Activated CD4-positive, alpha-beta T cell treated with anti-CD3 and anti-CD28 coated beads, Interleukin-2, amount 10 ng/mL, durations not matched to agents 7 days and 5 days (primary cell): ENCODE measurements at regions of chr11 and their contacts with region 1.

Region 1: DNA sequence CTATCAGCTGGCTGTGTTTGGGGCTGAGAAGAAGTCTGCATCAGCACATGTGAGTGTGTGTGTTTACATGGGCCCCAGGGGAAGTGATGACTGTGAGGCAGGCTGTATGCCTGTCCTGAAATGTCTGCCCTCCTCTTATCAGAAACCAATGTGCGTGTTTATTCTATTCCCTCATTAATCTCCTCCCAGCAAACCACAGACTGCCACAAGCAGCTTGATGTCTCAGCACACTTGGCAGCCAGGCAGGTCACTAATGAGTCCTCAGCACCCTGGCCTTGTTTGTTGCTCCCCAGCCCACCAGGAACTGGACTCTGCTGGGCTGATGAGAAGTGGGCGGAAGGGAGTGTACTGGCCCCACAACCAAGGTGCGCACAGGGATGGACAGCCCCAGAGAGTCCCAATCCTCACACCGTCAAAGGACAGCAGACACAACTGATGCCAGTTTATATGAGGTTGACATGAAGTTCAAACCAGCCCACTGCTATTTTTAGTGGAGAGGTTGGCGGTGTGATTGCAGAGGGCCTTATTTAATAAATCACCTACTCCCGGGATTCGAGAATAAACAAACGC is 225.8 kb downstream of the ETS1 start:
- DNase-seq: no peak
- H3K4me3 Mint-ChIP-seq: no peak overlapping the region
- H3K27ac Mint-ChIP-seq: no peak overlapping the region
- H3K4me1 Mint-ChIP-seq: peaks cover 9% of the 10 kb centered on the region
- H3K27me3 Mint-ChIP-seq: no peaks in the 10 kb centered on the region

Region 2: GRCh38 chr11:128342511-128343134 is 18.9 kb before region 1 on chr11:
- CTCF ChIA-PET with region 1: interaction called, 18 read pairs
- POLR2A ChIA-PET with region 1: no interaction called
- DNase-seq: peak; percentile 62
- H3K4me3 Mint-ChIP-seq: peak overlapping the region; percentile 66
- H3K27ac Mint-ChIP-seq: peak overlapping the region; percentile 98
- H3K4me1 Mint-ChIP-seq: peaks cover 78% of the 10 kb centered on the region
- H3K27me3 Mint-ChIP-seq: no peaks in the 10 kb centered on the region

Region 3: DNA sequence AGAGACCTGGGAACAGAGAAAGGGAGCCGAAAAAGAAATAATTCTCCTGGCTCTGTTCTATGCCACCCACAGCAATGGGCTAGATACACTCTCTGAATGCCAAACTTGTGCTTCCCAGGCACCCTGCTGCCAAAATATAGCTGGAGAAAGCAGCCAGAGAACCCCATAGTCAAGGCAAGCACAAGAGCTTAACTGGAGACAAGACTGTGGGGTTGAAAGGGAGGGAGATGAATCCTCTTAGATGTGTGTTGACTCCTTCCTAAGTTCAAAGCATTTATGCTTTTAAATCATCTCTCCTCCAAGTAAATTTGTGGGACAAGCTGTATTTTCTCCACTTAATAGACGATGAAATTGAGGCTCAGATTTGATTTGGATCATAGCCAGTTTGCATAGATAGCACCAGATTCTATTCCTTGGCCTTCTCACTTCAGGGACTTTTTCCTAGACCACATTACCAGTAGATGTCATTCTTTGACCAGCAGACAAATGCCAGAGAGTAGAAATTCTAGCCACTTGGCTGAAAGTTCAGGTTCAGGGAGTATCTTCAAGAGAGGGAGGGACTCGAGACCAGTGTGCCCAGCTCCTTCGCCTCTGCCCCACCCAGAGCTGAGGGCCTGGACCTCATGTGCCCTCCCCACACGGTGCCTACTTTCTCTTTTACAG is 242.3 kb after region 1 on chr11:
- CTCF ChIA-PET with region 1: no interaction called
- POLR2A ChIA-PET with region 1: no interaction called
- DNase-seq: no peak
- H3K4me3 Mint-ChIP-seq: no peak overlapping the region
- H3K27ac Mint-ChIP-seq: no peak overlapping the region
- H3K4me1 Mint-ChIP-seq: peaks cover 19% of the 10 kb centered on the region
- H3K27me3 Mint-ChIP-seq: no peaks in the 10 kb centered on the region